Dorsolateral prefrontal cortex (tissue), 120 donors: ENCODE measurements at regions of chr6 and their contacts with region 1.

Region 1: DNA sequence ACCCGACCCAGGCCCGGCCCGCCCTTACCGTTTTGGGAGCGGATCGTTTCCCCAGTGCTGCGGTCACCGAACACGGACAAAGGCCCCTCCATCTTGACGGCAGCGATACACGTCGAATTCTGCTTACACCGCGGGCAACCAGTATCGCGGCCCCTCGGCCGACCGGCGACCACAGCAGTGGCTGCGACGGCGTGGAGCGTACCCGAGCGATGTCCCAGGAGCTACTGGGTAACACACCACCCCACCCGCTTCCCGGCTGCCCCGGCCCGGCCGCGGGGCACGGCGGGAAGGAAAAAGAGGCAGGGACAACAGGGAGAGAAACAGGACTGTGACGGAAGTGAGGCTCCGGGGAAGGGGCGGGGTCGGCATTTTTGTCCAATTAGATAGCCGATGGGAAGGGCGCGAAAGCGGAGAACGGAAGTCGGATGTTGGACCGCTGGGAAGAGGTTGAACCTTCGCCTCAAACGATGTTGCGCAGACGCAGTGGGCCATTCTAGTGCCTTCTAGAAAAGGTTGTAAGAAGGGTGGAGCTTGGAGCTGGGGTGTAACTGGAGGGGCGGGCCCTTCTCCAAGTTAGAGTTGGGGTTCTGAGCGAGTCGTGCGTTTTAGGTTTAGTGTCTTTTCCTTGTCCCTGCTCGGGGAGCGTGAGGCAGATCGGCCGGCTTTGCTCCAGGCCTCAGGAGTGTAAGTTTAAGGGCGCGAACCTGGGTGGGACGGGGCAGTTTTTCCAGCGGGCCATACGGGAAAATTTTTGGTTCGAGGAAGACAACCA is at the start of gene TCP1:
- DNase-seq: peak; percentile 98 to 100 (median 99)
- H3K4me3 ChIP-seq: peak within 1 kb of the TSS; percentile 74 to 100 (median 97)
- H3K27ac ChIP-seq: peak within 1 kb of the TSS; percentile 80 to 100 (median 99)
- H3K27me3 ChIP-seq: no peaks in the 10 kb centered on the region
- CTCF ChIP-seq: peak in 11 of 56 donors; percentile 7 to 33 (median 24)
- total RNA-seq, gene TCP1: 87.9 to 251 (median 152) TPM

Region 2: DNA sequence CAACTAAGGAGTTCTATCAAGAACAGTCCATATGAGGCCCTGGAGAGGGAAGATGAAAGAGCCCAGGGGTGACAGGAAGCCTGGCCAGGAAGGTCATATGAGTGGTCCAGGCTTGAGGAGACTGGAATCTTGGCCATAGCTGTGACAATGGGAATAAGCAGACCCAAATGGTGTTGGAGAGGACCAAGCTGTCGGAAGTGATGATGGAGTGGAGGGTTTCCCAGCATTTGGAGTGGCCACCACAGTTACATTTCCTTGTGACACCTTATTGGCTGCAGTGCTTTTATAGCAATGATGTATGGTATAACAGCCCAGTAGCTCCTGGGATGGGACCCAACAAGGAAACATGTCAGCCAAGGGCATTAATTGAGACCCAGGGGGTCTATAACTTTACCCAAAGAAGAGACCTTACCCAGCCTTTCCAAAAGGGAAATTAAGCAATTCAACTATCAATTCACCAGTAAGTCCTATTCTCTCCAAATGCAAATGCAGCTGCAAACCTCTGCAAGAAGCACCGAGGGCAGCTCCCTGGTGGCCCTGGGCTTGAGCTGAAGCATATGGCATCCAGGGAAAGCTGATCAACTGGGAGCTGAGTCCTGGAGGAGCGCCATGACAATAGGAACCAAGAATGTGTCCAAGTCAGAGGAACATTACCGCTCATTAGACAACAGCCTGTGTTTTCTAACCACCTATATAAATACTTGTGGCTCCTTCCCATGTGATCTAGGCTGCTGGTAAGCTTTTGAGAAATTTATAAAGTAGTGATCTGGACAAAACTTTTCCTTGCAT is 315.9 kb before region 1 on chr6:
- intact Hi-C with region 1: no loop called
- DNase-seq: no peak
- H3K4me3 ChIP-seq: no peak overlapping the region
- H3K27ac ChIP-seq: no peak overlapping the region
- H3K27me3 ChIP-seq: no peaks in the 10 kb centered on the region
- CTCF ChIP-seq: no peak

Region 3: DNA sequence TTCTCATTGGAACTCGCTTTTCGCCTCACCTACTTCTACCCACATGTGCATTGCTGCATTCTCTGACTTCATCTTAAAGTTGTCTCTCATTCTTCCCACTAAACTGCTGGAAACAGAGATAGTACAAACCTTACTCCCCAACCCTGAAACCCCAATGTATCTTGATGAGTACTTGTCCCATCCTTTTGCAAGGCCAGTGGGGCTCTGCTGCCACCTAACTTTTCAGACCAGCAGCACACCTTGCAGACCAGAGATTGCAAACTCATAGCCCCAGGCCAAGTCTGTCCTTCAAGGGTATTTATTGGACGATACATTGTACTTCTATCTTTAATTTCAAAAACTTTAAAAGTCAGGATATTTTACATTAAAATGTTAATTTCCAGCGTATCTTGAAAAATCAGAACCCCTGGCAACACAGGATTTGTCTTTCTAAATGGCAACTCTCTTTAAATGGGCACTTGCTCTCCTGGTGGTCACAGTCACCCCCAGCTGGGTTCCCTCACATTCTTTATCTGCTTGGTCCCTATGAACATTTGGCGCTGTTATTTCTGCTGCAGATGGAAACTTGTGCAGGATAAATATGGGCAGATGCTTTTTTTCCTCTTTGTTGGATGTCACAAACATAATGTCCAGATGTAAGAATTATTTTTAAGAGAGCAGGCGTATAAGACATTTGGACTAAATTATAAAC is 180.5 kb before region 1 on chr6:
- intact Hi-C with region 1: no loop called
- DNase-seq: no peak
- H3K4me3 ChIP-seq: no peak overlapping the region
- H3K27ac ChIP-seq: no peak overlapping the region
- H3K27me3 ChIP-seq: no peaks in the 10 kb centered on the region
- CTCF ChIP-seq: peak in 9 of 56 donors; percentile 6 to 28 (median 21)

Region 4: GRCh38 chr6:159726918-159727716 is 62.4 kb before region 1 on chr6 and contains the start of gene WTAP:
- intact Hi-C with region 1: loop called (anchors 1 kb)
- DNase-seq: peak; percentile 91 to 97 (median 93)
- H3K4me3 ChIP-seq: peak within 1 kb of the TSS; percentile 64 to 100 (median 94)
- H3K27ac ChIP-seq: peak within 1 kb of the TSS; percentile 89 to 100 (median 99)
- H3K27me3 ChIP-seq: no peaks in the 10 kb centered on the region
- CTCF ChIP-seq: peak in 14 of 56 donors; percentile 4 to 33 (median 16)
- total RNA-seq, gene WTAP: 54.0 to 94.6 (median 69.0) TPM

Region 5: DNA sequence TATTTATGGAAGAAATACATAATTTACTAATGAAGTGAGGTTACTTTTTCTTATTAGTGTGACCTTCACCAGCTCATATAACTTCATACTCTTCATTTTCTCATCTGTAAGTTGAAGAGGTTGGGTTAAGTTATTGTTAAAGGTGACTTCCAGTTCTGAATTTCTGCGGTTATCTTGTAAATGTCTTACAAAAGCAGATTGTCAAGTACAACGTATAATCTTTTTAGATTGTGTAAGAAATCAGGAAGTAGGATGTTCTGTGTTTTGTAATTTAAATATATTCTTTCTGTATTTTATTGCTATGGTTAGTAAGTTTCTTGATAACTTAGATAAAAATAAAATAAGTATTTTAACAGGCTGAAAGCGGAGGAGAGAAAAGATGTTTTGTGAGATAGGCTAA is 50.2 kb before region 1 on chr6:
- intact Hi-C with region 1: no loop called
- DNase-seq: no peak
- H3K4me3 ChIP-seq: no peak overlapping the region
- H3K27ac ChIP-seq: peak overlapping the region in 1 of 59 donors; percentile 11
- H3K27me3 ChIP-seq: no peaks in the 10 kb centered on the region
- CTCF ChIP-seq: no peak

Region 6: GRCh38 chr6:159761873-159762680 is 27.5 kb before region 1 on chr6 and contains the start of gene ACAT2:
- intact Hi-C with region 1: loop called (anchors 1 kb)
- DNase-seq: peak; percentile 96 to 99 (median 98)
- H3K4me3 ChIP-seq: peak within 1 kb of the TSS; percentile 63 to 100 (median 98)
- H3K27ac ChIP-seq: peak within 1 kb of the TSS; percentile 92 to 100 (median 100)
- H3K27me3 ChIP-seq: no peaks in the 10 kb centered on the region
- CTCF ChIP-seq: peak in 22 of 56 donors; percentile 3 to 42 (median 26)
- total RNA-seq, gene ACAT2: 15.6 to 93.3 (median 38.7) TPM

Region 7: DNA sequence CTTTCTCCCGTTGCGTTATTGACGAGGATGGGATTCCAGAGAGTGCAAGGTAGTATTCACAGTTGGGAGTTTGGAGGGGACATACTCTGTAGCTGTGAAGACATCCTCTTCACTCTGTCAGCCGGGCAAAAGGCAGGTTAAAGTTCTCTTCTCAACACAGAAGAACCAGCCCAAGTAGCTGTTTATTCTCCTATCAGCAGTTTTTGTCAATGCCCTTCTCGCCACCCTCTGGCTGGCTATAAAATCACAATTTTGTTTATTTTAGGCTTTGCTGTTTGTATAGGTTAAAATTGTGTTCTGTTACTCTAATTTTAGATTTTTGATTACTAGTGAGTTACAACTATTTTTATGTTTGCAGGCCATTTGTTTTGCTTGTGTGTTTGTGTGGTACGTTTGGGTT is 63.3 kb after region 1 on chr6:
- intact Hi-C with region 1: loop called in 1 of 2 experiments (anchors 5 kb)
- DNase-seq: no peak
- H3K4me3 ChIP-seq: peak overlapping the region in 2 of 59 donors; percentile 14 to 17
- H3K27ac ChIP-seq: peak overlapping the region in 8 of 59 donors; percentile 4 to 69 (median 24)
- H3K27me3 ChIP-seq: no peaks in the 10 kb centered on the region
- CTCF ChIP-seq: peak in 43 of 56 donors; percentile 8 to 76 (median 41)

Region 8: GRCh38 chr6:159866286-159867247 is 77.0 kb after region 1 on chr6:
- intact Hi-C with region 1: no loop called
- DNase-seq: no peak
- H3K4me3 ChIP-seq: no peak overlapping the region
- H3K27ac ChIP-seq: no peak overlapping the region
- H3K27me3 ChIP-seq: peaks cover 0 to 7% (median 0%) of the 10 kb centered on the region in 45 donors
- CTCF ChIP-seq: no peak

Region 9: GRCh38 chr6:159968440-159969203 is 179.1 kb after region 1 on chr6 and contains the start of gene IGF2R:
- intact Hi-C with region 1: loop called in 1 of 2 experiments (anchors 10 kb)
- DNase-seq: peak; percentile 80 to 92 (median 89)
- H3K4me3 ChIP-seq: peak within 1 kb of the TSS; percentile 68 to 98 (median 91)
- H3K27ac ChIP-seq: peak within 1 kb of the TSS in 57 of 59 donors; percentile 18 to 94 (median 80)
- H3K27me3 ChIP-seq: no peaks in the 10 kb centered on the region
- CTCF ChIP-seq: peak in 22 of 56 donors; percentile 9 to 40 (median 25)
- total RNA-seq, gene IGF2R: 28.4 to 54.8 (median 42.0) TPM